ENCODE measurements at regions of chr11 and their contacts with region 1.

Region 1: GRCh38 chr11:94731880-94732601 is 36.1 kb upstream of the AMOTL1 start:
- DNase-seq: no peak

Region 2: GRCh38 chr11:94650756-94651155 is 81.3 kb before region 1 on chr11:
- intact Hi-C with region 1: loop called (anchors 5 kb)
- DNase-seq: no peak

Region 3: GRCh38 chr11:94694309-94695060 is 37.6 kb before region 1 on chr11:
- intact Hi-C with region 1: no loop called
- DNase-seq: no peak

Measured in cardiac septum (tissue), 1 donor.